Aorta (tissue), 5 donors: ENCODE measurements at regions of chr11 and their contacts with region 1.

Region 1: GRCh38 chr11:108467091-108467823 is at the start of gene C11orf65:
- DNase-seq: peak; percentile 96 to 98
- ATAC-seq: peak; percentile 100
- H3K4me3 ChIP-seq: peak within 1 kb of the TSS; percentile 22 to 41
- H3K27ac ChIP-seq: peak within 1 kb of the TSS; percentile 91 to 94
- H3K4me1 ChIP-seq: peaks cover 0 to 2% of the 10 kb centered on the region in 2 donors
- H3K27me3 ChIP-seq: no peaks in the 10 kb centered on the region
- total RNA-seq, gene C11orf65: 0.36 TPM in 1 of 2 donors, not detected in the other

Region 2: GRCh38 chr11:108538022-108538424 is 70.8 kb after region 1 on chr11:
- intact Hi-C with region 1: no loop called
- DNase-seq: no peak
- ATAC-seq: no peak
- H3K4me3 ChIP-seq: no peak overlapping the region
- H3K27ac ChIP-seq: no peak overlapping the region
- H3K4me1 ChIP-seq: no peaks in the 10 kb centered on the region
- H3K27me3 ChIP-seq: no peaks in the 10 kb centered on the region

Region 3: GRCh38 chr11:108593214-108593922 is 126.1 kb after region 1 on chr11 and contains the start of gene EXPH5:
- intact Hi-C with region 1: loop called in 1 of 2 experiments (anchors 1 kb)
- DNase-seq: peak; percentile 85 to 94
- ATAC-seq: peak; percentile 93
- H3K4me3 ChIP-seq: peak within 1 kb of the TSS; percentile 72 to 79
- H3K27ac ChIP-seq: no peak within 1 kb of the TSS
- H3K4me1 ChIP-seq: no peaks in the 10 kb centered on the region
- H3K27me3 ChIP-seq: no peaks in the 10 kb centered on the region
- total RNA-seq, gene EXPH5: 1.8 to 4.5 TPM

Region 4: GRCh38 chr11:108647701-108648527 is 180.7 kb after region 1 on chr11:
- intact Hi-C with region 1: loop called in 1 of 2 experiments (anchors 5 kb)
- DNase-seq: peak in 1 of 2 donors; percentile 71
- ATAC-seq: peak; percentile 86
- H3K4me3 ChIP-seq: no peak overlapping the region
- H3K27ac ChIP-seq: no peak overlapping the region
- H3K4me1 ChIP-seq: peaks cover 0 to 3% of the 10 kb centered on the region in 2 donors
- H3K27me3 ChIP-seq: no peaks in the 10 kb centered on the region